ENCODE measurements at regions of chr3 and their contacts with region 1.

Region 1: GRCh38 chr3:126134219-126134975 is 46.0 kb downstream of the ALDH1L1 start:
- DNase-seq: peak; percentile 73 to 86
- ATAC-seq: peak; percentile 91 to 95 (median 92)
- H3K4me3 ChIP-seq: no peak overlapping the region
- H3K27ac ChIP-seq: peak overlapping the region; percentile 36
- H3K4me1 ChIP-seq: peaks cover 3% of the 10 kb centered on the region
- H3K27me3 ChIP-seq: no peaks in the 10 kb centered on the region
- CTCF ChIP-seq: peak; percentile 82

Region 2: DNA sequence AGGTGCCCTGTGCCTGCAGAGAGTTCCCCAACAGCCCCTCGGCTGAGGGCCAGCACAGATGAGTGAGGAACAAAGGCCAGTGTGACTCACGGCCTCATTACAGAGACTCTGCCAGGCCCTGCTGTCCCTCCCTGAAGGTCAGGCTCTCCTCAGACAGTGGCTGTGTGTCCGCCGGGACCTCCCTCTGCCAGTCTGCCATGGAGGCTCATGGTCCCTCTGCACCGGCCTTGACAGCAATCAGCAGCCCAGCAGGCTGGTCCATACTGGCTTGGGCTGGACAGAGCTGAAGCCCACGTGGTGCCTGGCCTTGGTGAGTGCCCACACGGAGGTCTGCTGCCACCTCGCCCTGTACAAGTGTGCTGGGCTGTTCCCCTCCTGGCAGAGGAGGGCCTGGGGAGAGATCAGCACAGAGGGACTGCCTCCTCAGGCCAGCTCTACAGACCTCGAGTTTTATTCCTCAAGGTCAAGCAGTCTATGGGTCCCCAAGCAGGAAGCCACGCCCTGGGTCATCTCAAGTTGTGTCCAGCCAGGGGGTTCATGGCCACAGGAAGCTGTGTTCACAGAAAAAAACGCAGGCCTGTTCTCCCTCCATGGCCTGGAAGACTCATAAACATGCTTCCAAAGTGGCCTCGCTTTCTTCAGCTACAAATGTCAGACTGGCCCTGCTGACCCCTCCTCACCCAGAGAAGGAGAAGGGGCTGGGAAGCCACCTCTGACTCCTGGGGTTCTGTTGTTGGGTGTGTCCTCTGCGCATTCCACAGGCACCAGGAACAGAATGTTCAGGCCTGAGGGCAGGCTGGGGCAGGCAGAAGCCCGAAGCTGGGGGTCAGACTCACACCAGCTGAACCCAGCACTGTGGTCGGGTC is 77.5 kb before region 1 on chr3:
- intact Hi-C with region 1: no loop called
- DNase-seq: peak; percentile 77 to 87
- ATAC-seq: peak; percentile 86 to 95 (median 92)
- H3K4me3 ChIP-seq: no peak overlapping the region
- H3K27ac ChIP-seq: peak overlapping the region; percentile 60
- H3K4me1 ChIP-seq: peaks cover 58% of the 10 kb centered on the region
- H3K27me3 ChIP-seq: no peaks in the 10 kb centered on the region
- CTCF ChIP-seq: no peak

Region 3: DNA sequence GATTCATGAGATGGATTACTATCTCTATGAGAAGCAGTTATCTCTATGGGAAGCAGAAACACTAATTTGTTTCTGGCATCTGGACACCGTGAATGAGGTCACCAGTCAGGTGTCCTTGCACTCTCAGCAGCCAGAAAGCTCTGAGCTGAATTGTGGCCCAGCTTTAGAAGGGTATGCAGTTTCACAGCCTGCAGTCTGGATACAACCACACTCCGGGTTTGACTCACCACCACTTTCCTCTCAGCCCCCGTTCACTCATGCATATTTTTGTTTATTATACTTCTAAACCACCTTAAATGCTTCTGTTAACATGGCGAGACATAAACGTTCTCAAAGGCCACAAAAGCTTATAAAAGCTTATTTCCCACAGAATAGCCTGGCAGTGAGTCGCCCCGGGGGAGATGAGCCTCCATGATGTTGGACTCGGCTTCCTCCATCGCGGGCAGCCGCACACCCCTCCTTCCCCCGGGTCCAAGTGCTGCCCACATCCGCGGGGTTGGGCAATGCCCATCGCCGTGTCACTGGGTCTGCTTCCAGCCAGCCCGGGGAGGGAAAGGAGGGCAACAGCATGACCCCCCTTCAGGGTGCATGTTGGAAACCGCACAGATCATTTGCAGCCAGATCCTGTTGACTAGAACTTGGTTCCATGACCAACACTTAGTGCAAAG is 33.6 kb before region 1 on chr3:
- intact Hi-C with region 1: no loop called
- DNase-seq: peak; percentile 48 to 63
- ATAC-seq: peak; percentile 63 to 81 (median 75)
- H3K4me3 ChIP-seq: peak overlapping the region; percentile 48
- H3K27ac ChIP-seq: peak overlapping the region; percentile 91
- H3K4me1 ChIP-seq: peaks cover 56% of the 10 kb centered on the region
- H3K27me3 ChIP-seq: no peaks in the 10 kb centered on the region
- CTCF ChIP-seq: no peak

Region 4: GRCh38 chr3:126180477-126181397 is 46.3 kb after region 1 on chr3 and contains the start of gene ALDH1L1:
- intact Hi-C with region 1: loop called in 1 of 2 experiments (anchors 5 kb)
- DNase-seq: peak; percentile 88 to 96
- ATAC-seq: peak; percentile 90 to 95 (median 93)
- H3K4me3 ChIP-seq: peak within 1 kb of the TSS; percentile 82
- H3K27ac ChIP-seq: peak within 1 kb of the TSS; percentile 98
- H3K4me1 ChIP-seq: peaks cover 19% of the 10 kb centered on the region
- H3K27me3 ChIP-seq: peaks cover 0 to 5% (median 0%) of the 10 kb centered on the region in 3 donors
- CTCF ChIP-seq: no peak
- total RNA-seq, gene ALDH1L1: 34.5 to 121 (median 62.7) TPM

Region 5: DNA sequence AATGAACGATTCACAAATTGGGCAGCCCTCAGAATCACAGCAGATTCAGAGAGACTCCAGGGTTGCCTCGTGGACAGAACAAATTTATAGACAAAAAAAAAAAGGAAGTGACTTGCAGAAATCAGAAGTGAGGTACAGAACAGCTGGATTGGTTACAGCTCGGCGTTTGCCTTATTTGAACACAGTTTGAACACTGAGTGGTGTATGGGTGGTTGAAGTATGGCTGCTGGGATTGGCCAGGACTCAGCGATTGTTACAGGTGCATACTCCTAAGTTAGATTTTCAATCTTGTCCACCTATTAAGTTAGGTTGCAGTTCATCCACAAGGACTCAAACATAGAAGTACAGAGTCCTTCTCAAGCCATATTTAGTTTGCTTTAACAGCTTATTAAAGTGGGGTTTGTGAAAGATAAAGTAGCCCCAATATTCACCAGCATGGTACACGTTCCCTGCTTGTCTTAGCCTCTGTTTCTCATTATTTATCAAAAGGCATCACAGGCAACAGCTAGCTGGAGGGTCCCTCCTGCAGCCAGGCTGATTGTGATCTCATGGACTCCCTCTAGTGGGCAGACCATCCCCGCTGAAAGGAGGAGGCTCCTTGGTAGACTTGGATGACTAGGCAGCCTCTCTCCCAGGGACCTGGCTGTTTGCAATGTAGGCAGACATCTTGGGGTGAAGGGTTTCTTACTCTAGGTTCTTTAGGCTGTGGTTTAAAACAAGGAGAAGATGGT is 63.6 kb after region 1 on chr3:
- intact Hi-C with region 1: loop called (anchors 2 kb)
- DNase-seq: peak; percentile 72 to 80
- ATAC-seq: peak; percentile 97 to 99 (median 98)
- H3K4me3 ChIP-seq: peak overlapping the region; percentile 11
- H3K27ac ChIP-seq: peak overlapping the region; percentile 48
- H3K4me1 ChIP-seq: peaks cover 7% of the 10 kb centered on the region
- H3K27me3 ChIP-seq: no peaks in the 10 kb centered on the region
- CTCF ChIP-seq: peak; percentile 79

Region 6: GRCh38 chr3:126212602-126213378 is 78.4 kb after region 1 on chr3:
- intact Hi-C with region 1: loop called in 1 of 2 experiments (anchors 5 kb)
- DNase-seq: peak; percentile 50 to 77
- ATAC-seq: peak; percentile 77 to 88 (median 80)
- H3K4me3 ChIP-seq: peak overlapping the region; percentile 74
- H3K27ac ChIP-seq: peak overlapping the region; percentile 33
- H3K4me1 ChIP-seq: peaks cover 18% of the 10 kb centered on the region
- H3K27me3 ChIP-seq: peaks cover 0 to 6% (median 0%) of the 10 kb centered on the region in 3 donors
- CTCF ChIP-seq: peak; percentile 50

Region 7: GRCh38 chr3:126394575-126395228 is 260.3 kb after region 1 on chr3 and contains the start of gene CFAP100:
- intact Hi-C with region 1: loop called (anchors 5 kb)
- DNase-seq: peak in 1 of 2 donors; percentile 57
- ATAC-seq: peak; percentile 36 to 57 (median 45)
- H3K4me3 ChIP-seq: peak within 1 kb of the TSS; percentile 54
- H3K27ac ChIP-seq: no peak within 1 kb of the TSS
- H3K4me1 ChIP-seq: no peaks in the 10 kb centered on the region
- H3K27me3 ChIP-seq: peaks cover 0 to 7% (median 0%) of the 10 kb centered on the region in 3 donors
- CTCF ChIP-seq: no peak
- total RNA-seq, gene CFAP100: not detected

Measured in psoas muscle (tissue), 8 donors.